Ovary (tissue), 10 donors: ENCODE measurements at regions of chr6 and their contacts with region 1.

Region 1: GRCh38 chr6:164947164-164947563 is 362.2 kb downstream of the C6orf118 start:
- DNase-seq: no peak
- H3K4me3 ChIP-seq: no peak overlapping the region
- H3K27ac ChIP-seq: no peak overlapping the region
- H3K4me1 ChIP-seq: no peaks in the 10 kb centered on the region
- H3K27me3 ChIP-seq: no peaks in the 10 kb centered on the region
- CTCF ChIP-seq: no peak
- EP300 ChIP-seq: no peak
- POLR2A ChIP-seq: no peak

Region 2: GRCh38 chr6:164911873-164912580 is 35.1 kb before region 1 on chr6:
- intact Hi-C with region 1: loop called in 1 of 4 experiments (anchors 1 kb)
- DNase-seq: no peak
- H3K4me3 ChIP-seq: no peak overlapping the region
- H3K27ac ChIP-seq: no peak overlapping the region
- H3K4me1 ChIP-seq: no peaks in the 10 kb centered on the region
- H3K27me3 ChIP-seq: no peaks in the 10 kb centered on the region
- CTCF ChIP-seq: no peak
- EP300 ChIP-seq: no peak
- POLR2A ChIP-seq: no peak

Region 3: DNA sequence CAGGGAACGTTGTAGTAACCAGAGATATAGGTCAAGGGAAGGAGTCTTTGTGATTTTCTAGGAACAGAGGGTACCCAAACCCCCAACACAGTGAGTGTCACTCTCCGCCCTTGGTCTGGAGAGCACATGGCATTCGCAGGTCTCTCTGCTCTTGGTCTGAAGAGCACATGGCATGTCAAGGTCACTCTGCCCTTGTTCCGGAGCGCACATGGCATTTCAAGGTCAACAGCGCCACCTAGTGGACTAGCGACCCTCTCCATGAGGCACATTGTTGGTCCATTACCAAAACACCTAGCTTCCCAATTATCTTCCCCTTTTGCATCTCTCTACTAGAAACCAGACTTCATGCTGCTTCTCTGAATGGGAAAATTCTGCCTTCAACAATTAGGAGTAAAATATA is 102.2 kb after region 1 on chr6:
- intact Hi-C with region 1: no loop called
- DNase-seq: peak in 1 of 5 donors; percentile 22
- H3K4me3 ChIP-seq: no peak overlapping the region
- H3K27ac ChIP-seq: no peak overlapping the region
- H3K4me1 ChIP-seq: no peaks in the 10 kb centered on the region
- H3K27me3 ChIP-seq: no peaks in the 10 kb centered on the region
- CTCF ChIP-seq: no peak
- EP300 ChIP-seq: no peak
- POLR2A ChIP-seq: no peak

Region 4: DNA sequence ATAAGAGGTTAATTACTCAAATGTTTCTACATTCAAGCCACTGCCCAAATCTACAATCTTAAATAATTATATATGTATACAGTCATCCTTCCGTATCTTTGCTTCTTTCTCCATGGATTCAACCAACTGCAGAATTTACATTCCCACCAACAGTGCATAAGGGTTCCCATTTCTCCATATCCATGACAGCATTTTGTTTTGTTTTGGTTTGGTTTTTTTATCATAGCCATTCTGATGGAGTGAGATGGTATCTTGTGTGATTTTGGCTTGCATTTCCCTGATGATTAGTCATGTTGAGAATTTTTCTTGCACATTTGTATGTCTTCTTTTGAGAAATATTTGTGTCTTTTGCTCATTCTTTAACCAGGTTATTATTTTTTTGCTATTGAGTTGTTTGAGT is 163.7 kb after region 1 on chr6:
- intact Hi-C with region 1: no loop called
- DNase-seq: no peak
- H3K4me3 ChIP-seq: no peak overlapping the region
- H3K27ac ChIP-seq: no peak overlapping the region
- H3K4me1 ChIP-seq: no peaks in the 10 kb centered on the region
- H3K27me3 ChIP-seq: no peaks in the 10 kb centered on the region
- CTCF ChIP-seq: no peak
- EP300 ChIP-seq: no peak
- POLR2A ChIP-seq: no peak